ENCODE measurements at regions of chr15 and their contacts with region 1.

Region 1: GRCh38 chr15:101489236-101489632 is 273 bp downstream of the PCSK6 start:
- DNase-seq: peak; percentile 93

Region 2: DNA sequence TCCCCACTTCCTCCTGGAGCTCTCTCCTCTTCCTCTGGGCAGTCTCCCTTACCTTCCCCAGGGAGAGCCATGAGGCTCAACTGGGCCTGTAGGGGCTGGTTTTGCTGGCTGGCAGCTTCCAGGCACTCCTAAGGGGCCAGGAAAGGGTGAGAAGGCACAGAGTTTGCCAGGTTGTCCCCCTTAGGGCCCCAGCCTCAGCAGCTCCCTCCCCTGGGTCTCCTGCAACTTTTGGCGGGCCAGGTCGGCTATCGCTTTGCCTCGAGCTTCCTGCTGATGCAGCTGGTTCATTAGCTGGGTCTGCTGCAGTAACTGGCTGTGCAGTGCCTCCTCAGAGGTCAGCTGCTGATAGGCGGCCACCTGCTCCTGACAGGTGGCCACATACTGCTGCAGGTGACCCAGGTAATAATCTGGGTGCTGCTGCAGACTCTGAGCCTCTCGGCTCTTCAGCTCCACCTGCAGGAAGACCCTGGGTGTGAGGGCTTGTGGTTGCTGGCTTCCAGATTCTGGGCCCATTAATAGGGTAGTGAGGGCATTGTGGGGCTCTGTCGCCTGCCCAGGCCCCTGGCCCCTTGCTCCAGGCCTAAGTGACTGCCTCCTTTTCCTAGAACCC is 284.4 kb after region 1 on chr15:
- CTCF ChIA-PET with region 1: interaction called, 11 read pairs
- POLR2A ChIA-PET with region 1: interaction called, 35 read pairs
- DNase-seq: peak; percentile 15